Calu3 (cell line): ENCODE measurements at regions of chrX and their contacts with region 1.

Region 1: GRCh38 chrX:111823128-111823527 is 52.9 kb upstream of the TRPC5OS start:
- DNase-seq: peak; percentile 56
- H3K4me3 Mint-ChIP-seq: no peak overlapping the region
- H3K27ac Mint-ChIP-seq: no peak overlapping the region
- H3K4me1 Mint-ChIP-seq: peaks cover 18% of the 10 kb centered on the region
- H3K27me3 Mint-ChIP-seq: no peaks in the 10 kb centered on the region
- CTCF ChIP-seq: peak; percentile 64

Region 2: GRCh38 chrX:111756486-111756885 is 66.6 kb before region 1 on chrX:
- CTCF ChIA-PET with region 1: interaction called, 10 read pairs
- intact Hi-C with region 1: no loop called
- DNase-seq: no peak
- H3K4me3 Mint-ChIP-seq: no peak overlapping the region
- H3K27ac Mint-ChIP-seq: no peak overlapping the region
- H3K4me1 Mint-ChIP-seq: no peaks in the 10 kb centered on the region
- H3K27me3 Mint-ChIP-seq: no peaks in the 10 kb centered on the region
- CTCF ChIP-seq: no peak